ENCODE measurements at regions of chr15 and their contacts with region 1.

Region 1: DNA sequence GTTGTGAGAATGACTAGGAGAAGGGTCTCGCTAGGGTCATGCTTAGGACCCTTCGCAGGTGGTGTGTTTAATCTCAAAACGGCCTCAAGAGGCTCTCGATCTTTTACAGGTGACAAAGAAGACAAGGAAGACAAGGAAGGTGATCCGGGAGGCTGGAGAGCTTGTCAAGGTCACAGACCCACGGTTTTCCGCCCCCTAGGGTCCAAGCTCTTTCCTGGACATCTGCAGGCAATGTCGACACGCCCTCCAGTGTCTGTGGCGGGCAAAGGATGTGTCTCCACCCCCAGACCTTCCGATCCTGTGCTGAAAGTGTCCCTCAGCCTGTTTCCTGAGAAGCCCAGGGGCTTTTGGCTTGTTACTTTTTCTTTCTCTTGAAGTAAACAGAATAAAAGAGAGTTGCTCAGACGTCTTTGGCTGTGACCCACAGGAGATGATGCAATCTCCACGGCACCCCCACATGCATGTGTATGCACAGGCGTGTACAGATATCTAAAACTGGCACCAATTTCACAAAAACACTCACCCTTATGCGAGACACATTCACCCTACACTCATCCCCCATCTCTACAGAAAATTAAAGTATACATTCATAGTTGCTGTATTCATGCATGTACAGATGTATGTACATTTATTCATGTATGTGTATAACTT is 108.8 kb downstream of the KLF13 start:
- DNase-seq: peak in 8 of 10 donors; percentile 65 to 95 (median 78)

Region 2: DNA sequence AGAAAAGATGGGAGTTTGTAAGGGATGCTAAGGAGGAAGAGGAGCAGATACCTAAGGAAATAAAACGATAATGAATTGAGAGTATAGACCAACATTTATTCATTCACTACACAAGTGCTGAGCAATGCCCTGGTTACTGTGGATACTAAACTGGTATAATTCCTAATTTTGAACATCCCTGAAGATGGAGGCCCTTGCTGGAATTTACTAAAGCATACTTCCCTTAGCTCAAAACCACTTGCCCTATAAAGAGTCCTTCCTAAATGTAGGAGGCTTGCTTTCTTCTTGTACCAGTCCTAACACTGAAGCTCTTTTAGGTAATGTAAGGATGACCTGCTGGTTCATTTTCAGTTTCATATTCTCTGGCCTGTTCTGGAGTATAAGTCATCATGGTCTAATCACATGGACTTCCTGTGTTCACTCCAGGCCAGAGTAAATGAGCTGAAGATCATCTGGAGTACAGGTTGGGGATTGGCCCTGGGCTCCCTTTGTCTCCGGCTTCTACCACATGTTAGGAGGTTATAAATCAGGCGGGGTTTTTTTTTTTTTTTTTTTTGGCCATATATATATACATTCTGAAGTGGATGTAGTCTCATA is 403.8 kb before region 1 on chr15:
- intact Hi-C with region 1: no loop called
- DNase-seq: no peak

Region 3: DNA sequence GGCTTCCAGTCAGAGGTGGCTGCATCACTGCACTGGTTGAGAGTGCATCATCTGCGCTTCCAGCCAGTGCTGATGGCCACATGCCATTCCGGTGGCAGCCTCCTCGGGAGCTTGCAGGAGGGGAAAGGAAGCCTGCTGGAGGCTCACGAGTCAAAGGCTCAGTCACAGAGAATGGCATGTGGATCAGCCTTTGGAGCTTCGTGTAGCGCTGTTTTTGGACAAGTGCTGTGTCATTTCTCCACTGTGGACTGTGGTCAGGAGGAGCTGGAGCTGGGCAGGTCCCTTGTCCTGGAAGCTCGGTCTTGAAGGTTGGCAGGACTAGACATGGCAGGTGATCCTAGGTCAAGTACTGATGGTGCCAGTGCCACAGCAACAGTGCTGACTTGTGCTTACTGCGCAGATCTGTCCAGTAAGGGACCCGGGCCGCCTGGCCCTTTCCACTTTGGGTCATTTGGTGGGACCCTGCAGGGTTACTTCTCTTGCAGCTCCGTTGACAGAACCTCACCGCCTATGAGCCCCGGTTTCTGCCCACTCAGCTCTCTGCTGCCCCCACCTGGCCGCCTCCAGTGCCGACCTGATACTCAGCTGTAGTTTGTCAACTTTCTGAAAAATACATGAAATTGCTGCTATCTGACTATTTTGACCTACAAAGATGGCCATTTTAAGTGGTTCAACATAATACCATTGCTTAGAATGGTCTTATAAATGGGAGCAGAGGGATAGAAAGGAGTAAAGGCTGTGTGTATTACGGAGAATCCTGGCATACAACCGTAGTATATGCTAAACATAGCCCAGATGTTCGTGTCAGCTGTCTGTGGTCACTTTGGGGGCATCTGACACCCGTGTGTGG is 306.2 kb before region 1 on chr15:
- intact Hi-C with region 1: no loop called
- DNase-seq: peak; percentile 68 to 96 (median 86)

Region 4: DNA sequence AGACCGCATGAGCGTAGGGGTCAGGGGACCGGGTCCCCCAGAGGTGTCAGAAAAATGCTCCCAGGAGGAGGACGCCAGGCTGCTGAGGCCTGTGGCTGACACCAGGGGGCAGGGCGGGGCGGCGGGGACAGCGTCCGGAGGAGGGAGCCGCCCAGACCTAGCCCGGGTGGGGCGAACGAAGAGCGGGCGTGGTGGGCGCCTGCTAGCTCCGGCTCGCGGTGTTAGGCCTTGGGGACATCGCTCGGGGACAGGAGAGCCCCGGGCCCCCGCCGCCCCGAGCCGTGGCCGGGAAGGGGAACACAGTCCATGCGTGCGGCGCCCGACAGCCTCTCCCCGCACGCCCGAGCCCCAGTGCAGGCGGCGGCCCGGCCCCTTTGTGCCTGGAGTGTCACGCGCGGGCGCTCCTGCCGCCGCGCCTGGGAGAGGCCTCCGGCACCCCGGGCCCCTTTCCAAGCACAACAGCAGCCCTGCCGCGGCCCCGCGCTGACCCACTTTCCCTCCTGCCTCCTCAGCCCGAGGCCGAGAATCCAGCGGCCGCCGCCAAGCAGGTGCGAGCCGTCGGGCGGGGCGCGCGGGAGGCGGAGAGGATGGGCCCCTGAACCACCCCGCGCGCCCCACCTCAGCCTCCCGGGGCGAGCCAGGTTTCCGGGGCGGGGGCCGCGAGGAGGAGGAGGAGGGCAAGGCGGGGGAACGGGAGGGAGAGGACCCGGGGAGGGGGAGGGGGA is 219.7 kb before region 1 on chr15:
- intact Hi-C with region 1: loop called (anchors 1 kb)
- DNase-seq: peak; percentile 60 to 96 (median 74)

Region 5: DNA sequence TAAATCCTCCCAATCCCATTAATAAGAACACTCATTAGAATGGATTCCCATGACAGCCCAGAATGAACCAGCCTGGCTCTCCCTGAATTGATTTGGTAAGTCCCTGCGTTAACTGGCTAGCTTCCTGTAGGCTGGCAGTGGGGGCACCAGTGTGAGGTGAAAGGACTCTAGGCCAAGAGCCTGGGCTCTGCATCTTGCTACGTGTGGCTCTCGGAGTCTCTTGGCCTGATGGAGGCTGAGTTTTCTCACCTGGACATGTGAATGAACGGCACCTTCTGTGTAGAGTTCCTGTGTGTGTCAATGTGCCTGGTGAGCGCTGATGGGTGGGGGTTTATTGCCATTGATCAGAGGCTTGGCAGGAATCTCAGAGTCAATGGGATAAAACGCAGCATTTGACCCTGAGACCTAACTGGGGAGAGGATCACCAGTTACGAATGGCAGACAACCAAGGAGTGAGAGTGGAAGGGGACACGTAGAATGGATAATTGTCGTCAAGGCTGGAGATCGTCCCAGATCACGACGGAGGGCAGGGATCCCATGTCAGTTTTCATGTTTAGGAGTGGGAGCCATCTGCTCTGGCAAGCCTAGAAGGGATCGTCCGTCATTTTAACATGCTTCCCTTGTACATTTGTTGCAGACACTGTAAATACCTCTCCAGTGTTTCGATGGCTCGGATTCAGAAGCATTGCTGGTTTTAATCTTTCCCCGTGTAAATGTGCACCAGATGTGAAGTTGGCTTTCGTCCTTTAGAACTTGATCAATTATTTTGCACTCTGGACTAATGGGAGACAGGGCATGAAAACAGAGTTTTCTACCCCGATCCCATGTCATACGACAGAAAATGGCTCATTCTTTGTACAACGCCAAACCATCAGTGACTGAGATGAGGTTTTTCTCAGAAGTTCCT is 117.7 kb before region 1 on chr15:
- intact Hi-C with region 1: no loop called
- DNase-seq: peak in 3 of 10 donors; percentile 27 to 73 (median 46)

Region 6: DNA sequence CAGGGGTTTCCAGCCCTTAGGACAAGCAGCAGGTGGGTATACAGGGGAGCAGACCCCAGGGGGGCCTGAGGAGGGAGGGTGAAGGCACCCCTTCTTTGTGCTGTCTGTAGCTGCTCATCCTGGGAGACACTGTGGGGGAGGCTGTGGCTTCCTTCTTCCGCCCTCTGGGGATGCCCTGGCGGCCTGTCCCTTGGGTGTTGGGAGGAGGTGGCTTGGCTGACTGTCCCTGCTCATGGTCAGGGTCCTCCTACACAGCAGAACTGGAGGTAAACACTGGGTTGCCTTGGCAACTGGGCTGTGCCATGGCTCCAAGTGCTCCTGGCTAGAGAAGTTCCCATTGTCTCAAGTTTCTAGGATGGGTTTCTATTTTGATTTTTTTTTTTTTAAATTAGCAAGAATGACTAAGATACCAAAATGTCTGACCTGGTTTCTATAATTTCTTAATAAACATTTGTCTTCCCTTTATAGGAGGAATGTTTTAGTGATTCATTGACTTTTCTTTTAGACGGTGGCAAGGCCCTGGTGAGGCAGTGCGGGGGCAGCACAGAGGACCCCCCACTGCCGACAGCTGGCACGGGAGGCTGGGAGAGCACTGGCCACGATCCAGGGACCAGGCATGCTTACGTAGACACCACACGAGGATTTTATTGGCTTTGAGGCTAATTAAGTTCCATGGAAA is 96.4 kb before region 1 on chr15:
- intact Hi-C with region 1: loop called (anchors 10 kb)
- DNase-seq: peak in 6 of 10 donors; percentile 49 to 91 (median 69)

Region 7: DNA sequence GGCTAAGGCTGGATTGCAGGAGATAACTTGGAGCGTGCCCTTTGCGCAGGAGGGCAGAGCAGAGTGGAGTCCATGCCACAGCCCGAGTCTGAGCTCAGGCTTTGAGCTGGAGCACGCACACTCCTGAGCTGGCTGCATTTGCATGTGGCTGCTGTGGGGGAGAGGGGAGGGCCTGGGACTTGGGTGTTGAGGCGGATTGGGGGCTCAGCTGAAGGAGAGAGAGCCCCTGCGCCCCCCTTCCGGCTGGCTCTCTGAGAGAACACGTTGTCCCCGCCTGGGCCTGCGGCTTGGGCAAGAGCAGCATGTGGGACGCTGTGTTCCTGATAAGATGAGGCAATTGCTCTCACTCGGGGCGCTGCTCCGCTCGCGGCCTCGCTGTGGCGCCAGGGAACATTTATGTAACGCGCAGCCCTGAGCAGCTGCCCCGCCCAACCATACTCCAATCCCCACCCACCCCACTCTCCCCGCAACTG is 69.7 kb before region 1 on chr15:
- intact Hi-C with region 1: loop called (anchors 10 kb)
- DNase-seq: peak; percentile 84 to 99 (median 92)

Region 8: GRCh38 chr15:31472636-31473384 is 37.4 kb after region 1 on chr15:
- intact Hi-C with region 1: no loop called
- DNase-seq: no peak